ENCODE measurements at regions of chr1 and their contacts with region 1.

Region 1: GRCh38 chr1:119367427-119368124 is 1.0 kb upstream of the HAO2 start:
- DNase-seq: peak; percentile 27
- ATAC-seq: peak; percentile 79
- H3K4me3 ChIP-seq: no peak overlapping the region
- H3K27ac ChIP-seq: no peak overlapping the region
- H3K4me1 ChIP-seq: no peaks in the 10 kb centered on the region
- H3K27me3 ChIP-seq: peaks cover 12% of the 10 kb centered on the region; the same call in 1 of the 2 replicates
- CTCF ChIP-seq: peak; percentile 69 to 95 (median 87)
- POLR2A ChIP-seq: no peak
- RAD21 ChIP-seq: peak; percentile 84

Region 2: DNA sequence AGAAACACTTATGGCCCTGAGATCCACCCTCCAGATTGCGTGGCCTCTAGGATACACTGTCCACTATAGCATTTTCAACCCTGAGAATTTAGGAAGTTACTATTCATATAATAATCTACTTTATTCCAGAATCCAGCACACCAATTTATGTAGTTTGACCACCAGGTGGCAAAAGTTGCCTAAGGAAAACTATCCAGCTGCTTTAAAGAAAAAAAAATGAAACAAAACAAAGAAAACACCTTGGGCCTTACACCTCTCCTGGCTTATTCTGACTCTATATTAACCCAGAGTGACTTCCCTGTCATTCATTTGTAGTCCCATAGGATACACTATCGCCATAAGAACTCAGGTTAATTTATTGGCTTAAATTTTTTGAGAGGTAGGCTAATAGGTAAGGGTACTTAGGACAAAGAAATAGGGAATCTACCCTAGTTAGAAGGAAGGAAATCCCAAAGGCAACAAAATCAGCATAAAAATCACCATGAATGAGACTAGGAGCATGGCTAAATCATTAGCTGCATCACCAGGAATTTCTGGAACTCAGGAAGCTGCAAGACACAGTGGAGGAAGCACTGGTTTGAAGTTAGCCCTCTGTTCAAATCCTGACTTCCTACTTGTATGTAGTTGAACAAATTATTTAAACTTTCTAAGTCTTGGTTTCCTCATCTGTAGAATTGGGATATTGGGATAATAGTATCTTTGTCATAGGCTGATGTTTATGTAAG is 1290.1 kb before region 1 on chr1:
- CTCF ChIA-PET with region 1: interaction called, 4 read pairs
- POLR2A ChIA-PET with region 1: no interaction called
- RAD21 ChIA-PET with region 1: no interaction called
- intact Hi-C with region 1: loop called (anchors 1 kb)
- DNase-seq: peak; percentile 40
- ATAC-seq: peak; percentile 38
- H3K4me3 ChIP-seq: no peak overlapping the region
- H3K27ac ChIP-seq: no peak overlapping the region
- H3K4me1 ChIP-seq: no peaks in the 10 kb centered on the region
- H3K27me3 ChIP-seq: peaks cover 12% of the 10 kb centered on the region; the same call in 1 of the 2 replicates
- CTCF ChIP-seq: peak; percentile 39 to 73 (median 42); a peak in 4 of 6 replicates
- POLR2A ChIP-seq: no peak
- RAD21 ChIP-seq: peak; percentile 62

Region 3: DNA sequence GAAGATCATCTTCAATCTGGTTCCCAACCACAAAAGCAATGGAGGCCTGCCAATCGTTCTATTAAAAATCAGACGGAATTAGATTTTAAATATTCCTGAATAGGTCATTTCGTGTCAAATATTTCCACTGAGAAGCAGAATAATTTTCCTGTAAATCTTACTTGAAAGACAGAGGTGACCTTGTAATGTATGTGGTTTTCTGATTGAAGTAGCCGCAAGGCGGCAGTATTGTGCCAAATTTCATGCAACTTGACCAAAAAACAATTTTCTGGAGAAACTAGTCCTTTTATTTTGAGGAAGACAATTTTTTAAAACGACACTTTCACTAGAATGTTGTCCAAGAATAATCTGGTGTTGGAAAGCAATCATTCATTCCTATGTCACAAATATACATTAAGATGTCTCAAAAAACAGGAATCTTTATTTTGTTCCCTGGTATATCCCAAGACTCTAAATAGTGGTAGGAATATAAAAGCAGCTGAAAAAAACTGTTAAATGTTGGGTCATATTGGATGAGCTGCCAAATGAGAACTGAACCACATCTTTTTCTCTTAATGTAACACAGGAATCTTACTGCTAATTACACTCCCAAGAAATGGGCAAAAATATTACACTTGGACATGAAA is 1216.2 kb before region 1 on chr1:
- CTCF ChIA-PET with region 1: interaction called, 3 read pairs
- POLR2A ChIA-PET with region 1: no interaction called
- RAD21 ChIA-PET with region 1: no interaction called
- intact Hi-C with region 1: loop called (anchors 2 kb)
- DNase-seq: peak; percentile 39
- ATAC-seq: no peak
- H3K4me3 ChIP-seq: no peak overlapping the region
- H3K27ac ChIP-seq: no peak overlapping the region
- H3K4me1 ChIP-seq: no peaks in the 10 kb centered on the region
- H3K27me3 ChIP-seq: no peaks in the 10 kb centered on the region
- CTCF ChIP-seq: peak; percentile 39 to 76 (median 51); a peak in 5 of 6 replicates
- POLR2A ChIP-seq: no peak
- RAD21 ChIP-seq: peak; percentile 67

Region 4: GRCh38 chr1:119275145-119276134 is 92.1 kb before region 1 on chr1:
- CTCF ChIA-PET with region 1: interaction called, 18 read pairs
- POLR2A ChIA-PET with region 1: no interaction called
- RAD21 ChIA-PET with region 1: no interaction called
- intact Hi-C with region 1: loop called (anchors 1 kb)
- DNase-seq: peak; percentile 39
- ATAC-seq: peak; percentile 65
- H3K4me3 ChIP-seq: no peak overlapping the region
- H3K27ac ChIP-seq: no peak overlapping the region
- H3K4me1 ChIP-seq: peaks cover 9 to 18% of the 10 kb centered on the region in 2 experiments
- H3K27me3 ChIP-seq: no peaks in the 10 kb centered on the region; the same call in 1 of the 2 replicates
- CTCF ChIP-seq: peak; percentile 49 to 96 (median 94); a peak in 5 of 6 replicates
- POLR2A ChIP-seq: no peak
- RAD21 ChIP-seq: peak; percentile 60

Region 5: DNA sequence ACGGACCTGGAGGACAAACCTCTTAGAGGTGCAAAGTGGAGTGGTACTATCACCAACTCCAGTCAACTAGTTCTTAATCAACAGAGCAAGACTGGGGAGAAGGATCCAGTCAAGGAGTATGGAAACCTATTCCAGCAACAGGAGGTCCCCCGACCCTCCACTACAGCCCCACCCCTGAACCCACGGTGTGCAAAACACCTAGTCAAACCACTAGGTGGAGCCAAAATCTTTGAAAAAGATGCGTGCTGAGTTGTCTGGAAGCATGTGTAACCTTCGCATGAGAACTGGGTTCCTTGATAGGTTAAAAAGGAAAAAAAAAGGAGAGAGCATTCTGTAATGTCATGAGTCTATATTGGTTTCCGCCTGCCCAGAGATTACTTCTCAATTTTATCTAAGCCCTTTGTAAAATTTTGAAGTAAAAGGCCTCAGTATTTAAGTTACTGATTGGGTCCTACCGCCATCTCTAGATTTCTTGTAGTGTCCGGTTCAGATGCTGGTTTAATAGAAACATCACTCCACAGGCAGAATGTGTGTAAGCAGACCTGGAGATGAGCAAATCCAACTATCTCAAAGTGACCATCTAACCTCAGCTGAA is 80.9 kb before region 1 on chr1:
- CTCF ChIA-PET with region 1: interaction called, 3 read pairs
- POLR2A ChIA-PET with region 1: no interaction called
- RAD21 ChIA-PET with region 1: no interaction called
- intact Hi-C with region 1: loop called (anchors 1 kb)
- DNase-seq: peak; percentile 31
- ATAC-seq: peak; percentile 96
- H3K4me3 ChIP-seq: no peak overlapping the region
- H3K27ac ChIP-seq: no peak overlapping the region
- H3K4me1 ChIP-seq: no peaks in the 10 kb centered on the region
- H3K27me3 ChIP-seq: peaks cover 12% of the 10 kb centered on the region; the same call in 1 of the 2 replicates
- CTCF ChIP-seq: peak; percentile 54 to 79 (median 66); a peak in 5 of 6 replicates
- POLR2A ChIP-seq: no peak
- RAD21 ChIP-seq: peak; percentile 62

Region 6: DNA sequence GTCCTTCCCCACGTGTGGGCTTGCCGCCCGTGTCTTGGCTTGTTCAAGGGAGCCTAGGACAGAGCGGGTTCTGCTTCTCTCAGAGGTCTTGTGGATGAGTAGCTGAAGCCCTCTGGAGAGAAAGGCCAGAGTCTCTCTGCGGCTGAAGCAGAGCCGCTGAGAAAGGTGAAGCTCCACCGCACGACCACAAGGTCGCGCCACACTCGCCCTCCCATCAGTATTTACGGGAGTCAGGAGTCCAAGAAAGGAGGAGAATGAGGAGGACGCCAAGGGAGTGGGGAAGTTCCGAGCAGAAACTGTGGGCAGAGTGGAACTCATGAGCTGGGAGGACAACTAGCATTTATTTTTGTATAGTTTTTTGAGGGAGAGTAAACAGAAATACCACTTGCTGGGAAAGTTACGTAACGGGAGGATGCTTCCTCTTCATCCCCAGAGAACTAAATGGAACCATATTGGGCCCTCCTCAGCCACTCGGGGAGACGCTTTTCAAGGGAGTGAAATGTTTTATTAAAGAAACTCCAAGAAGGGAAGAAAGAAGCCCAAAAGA is 50.6 kb before region 1 on chr1:
- CTCF ChIA-PET with region 1: no interaction called
- POLR2A ChIA-PET with region 1: no interaction called
- RAD21 ChIA-PET with region 1: no interaction called
- intact Hi-C with region 1: loop called (anchors 2 kb)
- DNase-seq: peak; percentile 27
- ATAC-seq: peak; percentile 99
- H3K4me3 ChIP-seq: no peak overlapping the region
- H3K27ac ChIP-seq: no peak overlapping the region
- H3K4me1 ChIP-seq: no peaks in the 10 kb centered on the region
- H3K27me3 ChIP-seq: no peaks in the 10 kb centered on the region
- CTCF ChIP-seq: peak; percentile 37 to 82 (median 73); a peak in 5 of 6 replicates
- POLR2A ChIP-seq: no peak
- RAD21 ChIP-seq: peak; percentile 28; the same call in 1 of the 2 replicates

Region 7: GRCh38 chr1:119660298-119661083 is 292.9 kb after region 1 on chr1:
- CTCF ChIA-PET with region 1: no interaction called
- POLR2A ChIA-PET with region 1: no interaction called
- RAD21 ChIA-PET with region 1: no interaction called
- intact Hi-C with region 1: no loop called
- DNase-seq: no peak
- ATAC-seq: no peak
- H3K4me3 ChIP-seq: no peak overlapping the region
- H3K27ac ChIP-seq: no peak overlapping the region
- H3K4me1 ChIP-seq: peaks cover 0 to 5% of the 10 kb centered on the region in 2 experiments; a peak in 1 of 4 replicates
- H3K27me3 ChIP-seq: peaks cover 16% of the 10 kb centered on the region; the same call in 1 of the 2 replicates
- CTCF ChIP-seq: no peak
- POLR2A ChIP-seq: no peak
- RAD21 ChIP-seq: no peak